K562 (cell line): ENCODE measurements at regions of chr5 and their contacts with region 1.

Region 1: GRCh38 chr5:41856644-41857491 is 13.4 kb downstream of the OXCT1 start:
- DNase-seq: peak; percentile 64 to 86 (median 70)
- ATAC-seq: peak; percentile 98
- H3K4me3 ChIP-seq: no peak overlapping the region
- H3K27ac ChIP-seq: no peak overlapping the region
- H3K4me1 ChIP-seq: no peaks in the 10 kb centered on the region
- H3K27me3 ChIP-seq: no peaks in the 10 kb centered on the region; a peak in 1 of 5 replicates
- CTCF ChIP-seq: peak; percentile 74 to 95 (median 81)
- EP300 ChIP-seq: no peak
- POLR2A ChIP-seq: no peak
- RAD21 ChIP-seq: peak; percentile 96

Region 2: DNA sequence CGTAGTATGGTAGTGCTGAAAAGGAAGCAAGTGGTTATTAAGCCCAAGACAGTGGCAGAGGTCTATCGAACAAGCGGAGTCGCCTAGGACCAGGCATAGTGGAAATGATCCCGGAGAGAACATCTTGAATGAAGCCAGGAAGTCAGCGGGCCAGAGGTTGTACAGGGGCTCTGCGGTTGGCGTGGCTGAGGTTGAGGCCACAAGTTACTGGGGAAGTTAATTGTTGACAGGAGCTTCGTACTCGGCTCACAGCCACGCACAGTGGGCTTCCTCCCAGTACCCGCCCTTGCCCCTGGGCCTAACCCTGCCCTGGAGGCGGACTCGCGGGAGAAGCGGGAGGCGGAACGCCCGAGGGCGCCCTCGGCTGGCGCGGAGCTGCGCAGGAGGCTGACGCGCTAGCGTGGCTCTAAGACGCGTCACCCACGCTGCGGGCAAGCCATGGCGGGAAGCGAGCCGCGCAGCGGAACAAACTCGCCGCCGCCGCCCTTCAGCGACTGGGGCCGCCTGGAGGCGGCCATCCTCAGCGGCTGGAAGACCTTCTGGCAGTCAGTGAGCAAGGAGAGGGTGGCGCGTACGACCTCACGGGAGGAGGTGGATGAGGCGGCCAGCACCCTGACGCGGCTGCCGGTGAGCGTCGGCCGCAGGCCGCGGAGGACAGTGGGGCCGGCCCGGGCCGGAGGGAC is 68.1 kb after region 1 on chr5 and contains the start of gene FBXO4:
- CTCF ChIA-PET with region 1: interaction called, 5 read pairs
- POLR2A ChIA-PET with region 1: no interaction called
- in situ Hi-C with region 1: no loop called
- intact Hi-C with region 1: loop called (anchors 2 kb)
- DNase-seq: peak; percentile 80 to 95 (median 86)
- ATAC-seq: peak; percentile 97
- H3K4me3 ChIP-seq: peak within 1 kb of the TSS; percentile 66
- H3K27ac ChIP-seq: peak within 1 kb of the TSS; percentile 91
- H3K4me1 ChIP-seq: peaks cover 9 to 13% of the 10 kb centered on the region in 2 experiments; a peak in 3 of 5 replicates
- H3K27me3 ChIP-seq: no peaks in the 10 kb centered on the region
- CTCF ChIP-seq: peak; percentile 72 to 75 (median 73)
- EP300 ChIP-seq: no peak
- POLR2A ChIP-seq: peak; percentile 94
- RAD21 ChIP-seq: peak; percentile 59 to 61; a peak in 3 of 4 replicates
- polyA plus RNA-seq, gene FBXO4: 5.9 to 8.2 TPM

Region 3: GRCh38 chr5:42057254-42057690 is 200.4 kb after region 1 on chr5:
- CTCF ChIA-PET with region 1: interaction called, 19 read pairs
- POLR2A ChIA-PET with region 1: interaction called, 9 read pairs
- in situ Hi-C with region 1: loop called (anchors 5 kb)
- intact Hi-C with region 1: loop called (anchors 1 kb)
- DNase-seq: peak; percentile 52 to 71 (median 66)
- ATAC-seq: peak; percentile 95
- H3K4me3 ChIP-seq: no peak overlapping the region
- H3K27ac ChIP-seq: no peak overlapping the region
- H3K4me1 ChIP-seq: no peaks in the 10 kb centered on the region
- H3K27me3 ChIP-seq: 0 out of 5 replicates have a peak, but pooled peaks cover 0 to 8% of the 10 kb centered on the region in 2 experiments
- CTCF ChIP-seq: peak; percentile 83 to 86 (median 84)
- EP300 ChIP-seq: no peak
- POLR2A ChIP-seq: no peak
- RAD21 ChIP-seq: peak; percentile 81 to 86

Region 4: DNA sequence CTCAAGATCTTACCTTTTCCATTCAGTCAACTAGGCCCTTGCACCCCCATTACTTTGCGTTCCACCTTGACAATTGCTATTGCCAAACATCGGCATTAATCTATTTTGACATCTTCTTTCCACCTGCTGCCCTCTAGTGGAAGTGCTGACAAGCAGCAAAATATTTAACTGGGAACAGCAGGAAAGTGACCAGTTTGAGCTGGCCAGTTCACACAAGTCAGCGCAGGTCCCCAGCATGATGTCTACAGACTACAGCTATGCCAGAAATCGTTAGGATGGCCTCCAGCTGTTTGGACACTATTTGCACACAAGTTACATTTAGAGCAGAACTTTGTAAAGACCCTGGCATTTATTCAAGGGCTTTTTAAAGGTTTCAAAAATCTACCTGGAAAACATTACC is 726.5 kb after region 1 on chr5:
- CTCF ChIA-PET with region 1: no interaction called
- POLR2A ChIA-PET with region 1: interaction called, 3 read pairs
- in situ Hi-C with region 1: loop called (anchors 25 kb)
- intact Hi-C with region 1: loop called (anchors 10 kb)
- DNase-seq: peak; percentile 69 to 88 (median 75)
- ATAC-seq: peak; percentile 77
- H3K4me3 ChIP-seq: no peak overlapping the region
- H3K27ac ChIP-seq: no peak overlapping the region
- H3K4me1 ChIP-seq: peaks cover 16 to 32% of the 10 kb centered on the region in 2 experiments
- H3K27me3 ChIP-seq: peaks cover 0 to 7% of the 10 kb centered on the region in 2 experiments; a peak in 3 of 5 replicates
- CTCF ChIP-seq: peak; percentile 83 to 94 (median 93)
- EP300 ChIP-seq: peak; percentile 48; the same call in 1 of the 2 replicates
- POLR2A ChIP-seq: no peak
- RAD21 ChIP-seq: peak; percentile 69 to 81

Region 5: GRCh38 chr5:42767491-42768105 is 910.7 kb after region 1 on chr5:
- CTCF ChIA-PET with region 1: interaction called, 10 read pairs
- POLR2A ChIA-PET with region 1: no interaction called
- in situ Hi-C with region 1: loop called (anchors 25 kb)
- intact Hi-C with region 1: loop called (anchors 1 kb)
- DNase-seq: peak in 3 of 4 experiments; percentile 13 to 51 (median 26)
- ATAC-seq: peak; percentile 81
- H3K4me3 ChIP-seq: no peak overlapping the region
- H3K27ac ChIP-seq: no peak overlapping the region
- H3K4me1 ChIP-seq: no peaks in the 10 kb centered on the region
- H3K27me3 ChIP-seq: no peaks in the 10 kb centered on the region
- CTCF ChIP-seq: peak; percentile 40 to 79 (median 46); a peak in 3 of 6 replicates
- EP300 ChIP-seq: no peak
- POLR2A ChIP-seq: no peak
- RAD21 ChIP-seq: peak; percentile 90 to 91